ENCODE measurements at regions of chr12 and their contacts with region 1.

Region 1: DNA sequence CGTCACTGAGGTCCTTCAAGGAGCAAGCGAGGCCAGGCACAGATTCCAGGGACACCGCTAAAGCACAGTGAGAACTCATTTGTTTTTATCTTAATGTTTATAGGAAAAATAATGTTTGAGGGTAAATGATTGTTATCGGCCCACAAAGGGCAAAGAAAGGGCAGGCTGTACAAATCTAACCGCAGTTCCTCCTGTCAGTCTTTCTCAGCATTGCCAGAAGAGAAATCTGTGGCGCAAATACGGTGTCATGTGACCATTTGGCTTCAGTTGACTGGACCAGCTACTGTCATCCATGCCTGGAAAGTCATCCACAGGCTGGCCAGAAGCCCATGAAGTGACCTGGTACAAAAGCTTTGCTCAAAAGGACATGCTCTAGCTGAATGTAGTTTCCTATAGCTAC is 43.6 kb downstream of the HCAR2 start:
- DNase-seq: no peak
- ATAC-seq: no peak; a peak in 1 of 6 replicates
- H3K4me3 ChIP-seq: no peak overlapping the region
- H3K27ac ChIP-seq: 0 out of 6 replicates have a peak overlapping the region, but pooled peaks of 1 of the 2 experiments have one; percentile 31
- H3K4me1 ChIP-seq: no peaks in the 10 kb centered on the region
- CTCF ChIP-seq: no peak
- EP300 ChIP-seq: no peak
- POLR2A ChIP-seq: no peak
- RAD21 ChIP-seq: no peak

Region 2: DNA sequence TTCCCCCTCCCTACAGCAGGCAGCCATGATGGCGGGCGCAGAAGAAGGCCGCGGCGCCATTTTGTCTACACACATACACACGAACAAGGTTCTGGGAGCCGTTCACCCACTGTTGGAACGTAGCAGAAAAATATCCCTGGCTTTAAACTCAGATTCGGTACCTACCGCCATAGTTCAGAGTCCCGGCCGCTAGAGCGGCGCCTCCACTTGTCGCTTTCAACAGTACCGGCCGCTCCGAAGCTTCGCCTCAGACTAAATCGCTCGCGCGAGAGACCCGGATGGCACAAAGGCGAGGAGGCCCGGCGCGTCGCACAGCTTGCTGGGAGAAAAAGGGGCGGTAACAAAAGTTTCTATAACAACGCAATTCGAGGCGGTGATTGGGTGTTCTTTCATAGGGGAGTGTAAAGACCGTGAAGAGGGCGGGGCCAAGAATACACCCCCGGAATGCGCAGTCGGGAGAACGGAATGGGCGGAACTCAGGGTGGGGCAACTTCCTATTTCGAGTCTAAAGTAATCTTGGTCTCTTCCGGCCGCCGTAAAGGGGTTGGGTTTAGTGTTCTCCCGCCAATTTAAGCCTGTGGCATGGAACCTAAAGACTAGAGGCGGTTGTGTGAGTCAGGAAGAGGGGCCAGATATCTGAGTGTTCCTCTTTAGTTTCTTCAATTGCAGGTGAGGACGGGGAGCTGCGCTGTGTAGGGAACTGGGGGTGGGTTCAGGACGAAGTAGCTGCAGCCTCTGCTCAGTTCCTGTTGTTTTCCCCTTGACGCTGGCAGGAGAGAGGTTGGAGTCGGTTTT is 132.6 kb before region 1 on chr12 and contains the starts of genes KNTC1 and RSRC2:
- CTCF ChIA-PET with region 1: no interaction called
- POLR2A ChIA-PET with region 1: no interaction called
- DNase-seq: peak; percentile 99 to 100
- ATAC-seq: peak; percentile 92 to 93
- H3K4me3 ChIP-seq: peak within 1 kb of the TSS; percentile 69
- H3K27ac ChIP-seq: peak within 1 kb of the TSS; percentile 95
- H3K4me1 ChIP-seq: peaks cover 28% of the 10 kb centered on the region
- CTCF ChIP-seq: no peak
- EP300 ChIP-seq: no peak
- POLR2A ChIP-seq: peak; percentile 92
- RAD21 ChIP-seq: peak in 1 of 2 experiments; percentile 3; a peak in 1 of 5 replicates
- polyA plus RNA-seq, gene KNTC1: 61.1 and 68.7 TPM in 2 replicates
- polyA plus RNA-seq, gene RSRC2: 43.0 and 83.3 TPM in 2 replicates

Region 3: DNA sequence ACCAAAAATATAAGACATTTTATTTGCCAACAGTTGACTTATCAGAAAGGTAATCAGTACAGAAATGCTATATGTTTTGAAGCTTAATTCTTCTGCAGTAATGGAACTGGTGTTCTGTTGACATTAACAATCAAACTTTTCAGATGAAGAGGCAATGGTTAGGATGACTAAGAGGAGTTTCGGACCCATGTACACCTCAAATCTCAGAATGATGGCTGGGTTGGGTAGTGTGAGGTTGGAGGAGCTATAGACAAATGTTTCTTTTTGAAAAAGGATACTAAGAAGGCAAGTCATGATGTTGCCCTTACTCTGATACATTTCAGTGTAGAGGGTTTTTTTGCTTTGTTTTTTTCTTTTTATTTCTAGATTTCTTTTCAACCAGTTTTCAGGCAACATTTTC is 65.6 kb before region 1 on chr12:
- CTCF ChIA-PET with region 1: no interaction called
- POLR2A ChIA-PET with region 1: no interaction called
- DNase-seq: no peak
- ATAC-seq: no peak
- H3K4me3 ChIP-seq: no peak overlapping the region
- H3K27ac ChIP-seq: no peak overlapping the region
- H3K4me1 ChIP-seq: no peaks in the 10 kb centered on the region
- CTCF ChIP-seq: no peak
- EP300 ChIP-seq: no peak
- POLR2A ChIP-seq: no peak
- RAD21 ChIP-seq: no peak

Region 4: DNA sequence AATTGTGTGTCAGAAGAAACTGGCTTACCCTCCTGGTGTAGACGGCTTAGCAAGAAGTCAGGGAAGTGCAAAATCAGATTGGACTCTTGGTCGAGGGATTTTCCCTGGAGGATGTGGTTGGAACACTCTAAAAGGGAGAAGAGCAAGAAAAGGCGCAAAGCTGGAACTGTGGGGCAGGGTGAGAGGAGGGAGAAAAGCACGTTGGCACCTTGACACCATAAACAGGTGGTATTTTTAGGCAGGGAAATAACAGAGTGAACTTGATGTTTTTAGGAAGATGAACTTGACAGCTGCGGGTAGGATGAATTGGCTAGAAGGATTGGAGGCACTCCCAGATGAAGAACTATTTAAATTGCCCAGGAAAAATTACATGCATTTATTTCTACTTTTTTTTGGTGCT is 24.0 kb before region 1 on chr12:
- CTCF ChIA-PET with region 1: interaction called, 54 read pairs
- POLR2A ChIA-PET with region 1: no interaction called
- DNase-seq: no peak
- ATAC-seq: no peak
- H3K4me3 ChIP-seq: no peak overlapping the region
- H3K27ac ChIP-seq: no peak overlapping the region
- H3K4me1 ChIP-seq: no peaks in the 10 kb centered on the region
- CTCF ChIP-seq: no peak
- EP300 ChIP-seq: no peak
- POLR2A ChIP-seq: no peak
- RAD21 ChIP-seq: no peak